CD14-positive monocyte (primary cell): ENCODE measurements at regions of chr7 and their contacts with region 1.

Region 1: DNA sequence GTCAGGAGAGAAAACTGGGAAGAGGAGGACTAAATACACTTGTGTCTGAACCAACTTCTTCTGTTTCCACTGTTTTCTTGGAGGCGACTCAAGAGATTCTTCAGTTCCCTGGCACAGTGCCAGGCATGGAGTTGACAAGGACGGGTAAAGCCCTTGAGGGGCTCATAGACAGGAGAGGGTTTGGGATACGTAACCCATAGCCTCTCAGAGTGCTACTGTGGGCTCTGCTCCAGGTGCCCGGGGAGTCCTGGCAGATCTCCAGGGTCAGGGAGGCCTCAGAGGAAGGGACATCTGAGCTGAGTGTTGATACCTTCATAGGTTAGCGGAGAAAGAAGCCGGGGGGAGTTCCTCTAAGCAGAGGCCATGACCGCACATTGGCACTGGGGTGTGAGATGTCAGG is 42.0 kb downstream of the GALNT17 start:
- DNase-seq: no peak
- H3K4me3 ChIP-seq: no peak overlapping the region
- H3K4me3 Mint-ChIP-seq: no peak overlapping the region
- H3K27ac ChIP-seq: no peak overlapping the region
- H3K27ac Mint-ChIP-seq: no peak overlapping the region
- H3K4me1 ChIP-seq: no peaks in the 10 kb centered on the region
- H3K4me1 Mint-ChIP-seq: no peaks in the 10 kb centered on the region
- H3K27me3 ChIP-seq: no peaks in the 10 kb centered on the region
- H3K27me3 Mint-ChIP-seq: peaks cover 0 to 2% (median under 1%) of the 10 kb centered on the region in 3 donors
- CTCF ChIP-seq: no peak

Region 2: DNA sequence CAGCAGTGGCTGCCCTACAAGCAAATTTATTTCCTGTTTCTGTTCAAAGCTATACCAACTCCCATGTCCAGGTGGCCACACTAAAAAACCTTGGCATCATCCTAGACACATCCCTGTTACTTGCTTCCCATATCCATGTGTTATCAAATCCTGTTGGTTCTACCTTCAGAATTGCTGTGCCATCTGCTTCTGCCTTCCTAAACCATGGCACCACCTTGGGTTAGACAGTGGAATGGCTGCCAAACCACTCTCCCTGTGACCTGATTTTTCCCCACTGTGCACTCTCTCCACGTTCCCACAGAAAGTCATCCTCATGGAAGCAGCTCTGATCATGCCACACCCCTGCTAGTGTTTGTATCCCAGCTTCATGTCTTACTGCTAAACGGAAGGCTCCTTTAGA is 739.6 kb before region 1 on chr7:
- intact Hi-C with region 1: no loop called
- DNase-seq: no peak
- H3K4me3 ChIP-seq: no peak overlapping the region
- H3K4me3 Mint-ChIP-seq: no peak overlapping the region
- H3K27ac ChIP-seq: no peak overlapping the region
- H3K27ac Mint-ChIP-seq: no peak overlapping the region
- H3K4me1 ChIP-seq: no peaks in the 10 kb centered on the region
- H3K4me1 Mint-ChIP-seq: no peaks in the 10 kb centered on the region
- H3K27me3 ChIP-seq: no peaks in the 10 kb centered on the region
- H3K27me3 Mint-ChIP-seq: no peaks in the 10 kb centered on the region
- CTCF ChIP-seq: no peak

Region 3: GRCh38 chr7:71208881-71209280 is 34.9 kb after region 1 on chr7:
- intact Hi-C with region 1: loop called in 1 of 2 experiments (anchors 2 kb)
- DNase-seq: no peak
- H3K4me3 ChIP-seq: no peak overlapping the region
- H3K4me3 Mint-ChIP-seq: no peak overlapping the region
- H3K27ac ChIP-seq: no peak overlapping the region
- H3K27ac Mint-ChIP-seq: no peak overlapping the region
- H3K4me1 ChIP-seq: no peaks in the 10 kb centered on the region
- H3K4me1 Mint-ChIP-seq: no peaks in the 10 kb centered on the region
- H3K27me3 ChIP-seq: no peaks in the 10 kb centered on the region
- H3K27me3 Mint-ChIP-seq: no peaks in the 10 kb centered on the region
- CTCF ChIP-seq: no peak